ENCODE measurements at regions of chr11 and their contacts with region 1.

Region 1: GRCh38 chr11:114148013-114148382 is 88.5 kb downstream of the ZBTB16 start:
- DNase-seq: no peak
- H3K4me3 ChIP-seq: no peak overlapping the region
- H3K27ac ChIP-seq: peak overlapping the region; percentile 70 to 99
- H3K4me1 ChIP-seq: peaks cover 31% of the 10 kb centered on the region
- H3K27me3 ChIP-seq: no peaks in the 10 kb centered on the region
- CTCF ChIP-seq: no peak
- POLR2A ChIP-seq: no peak

Region 2: GRCh38 chr11:113628912-113629311 is 519.1 kb before region 1 on chr11:
- intact Hi-C with region 1: no loop called
- DNase-seq: no peak
- H3K4me3 ChIP-seq: no peak overlapping the region
- H3K27ac ChIP-seq: no peak overlapping the region
- H3K4me1 ChIP-seq: no peaks in the 10 kb centered on the region
- H3K27me3 ChIP-seq: no peaks in the 10 kb centered on the region
- CTCF ChIP-seq: no peak
- POLR2A ChIP-seq: no peak

Region 3: DNA sequence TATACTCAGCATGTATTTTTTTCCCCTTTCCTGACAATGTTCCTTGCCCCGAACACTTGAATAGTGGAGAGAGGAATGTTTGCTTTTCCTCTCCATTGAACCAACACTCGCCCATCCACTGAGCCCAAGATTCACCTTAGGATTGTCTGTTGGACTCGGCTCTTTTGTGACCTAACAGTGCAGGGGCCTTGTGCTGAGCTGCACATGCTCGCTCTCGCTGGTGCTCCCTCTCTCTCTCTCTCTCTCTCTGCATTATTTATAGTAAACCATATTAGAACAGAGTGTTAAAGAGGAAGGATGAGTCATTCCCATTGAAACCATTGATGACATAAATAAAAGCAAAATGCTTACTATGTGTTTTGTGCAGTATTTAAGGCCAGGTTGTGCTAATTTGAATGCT is 67.8 kb before region 1 on chr11:
- intact Hi-C with region 1: loop called (anchors 10 kb)
- DNase-seq: no peak
- H3K4me3 ChIP-seq: no peak overlapping the region
- H3K27ac ChIP-seq: peak overlapping the region; percentile 31 to 69
- H3K4me1 ChIP-seq: peaks cover 79% of the 10 kb centered on the region
- H3K27me3 ChIP-seq: no peaks in the 10 kb centered on the region
- CTCF ChIP-seq: no peak
- POLR2A ChIP-seq: no peak

Region 4: DNA sequence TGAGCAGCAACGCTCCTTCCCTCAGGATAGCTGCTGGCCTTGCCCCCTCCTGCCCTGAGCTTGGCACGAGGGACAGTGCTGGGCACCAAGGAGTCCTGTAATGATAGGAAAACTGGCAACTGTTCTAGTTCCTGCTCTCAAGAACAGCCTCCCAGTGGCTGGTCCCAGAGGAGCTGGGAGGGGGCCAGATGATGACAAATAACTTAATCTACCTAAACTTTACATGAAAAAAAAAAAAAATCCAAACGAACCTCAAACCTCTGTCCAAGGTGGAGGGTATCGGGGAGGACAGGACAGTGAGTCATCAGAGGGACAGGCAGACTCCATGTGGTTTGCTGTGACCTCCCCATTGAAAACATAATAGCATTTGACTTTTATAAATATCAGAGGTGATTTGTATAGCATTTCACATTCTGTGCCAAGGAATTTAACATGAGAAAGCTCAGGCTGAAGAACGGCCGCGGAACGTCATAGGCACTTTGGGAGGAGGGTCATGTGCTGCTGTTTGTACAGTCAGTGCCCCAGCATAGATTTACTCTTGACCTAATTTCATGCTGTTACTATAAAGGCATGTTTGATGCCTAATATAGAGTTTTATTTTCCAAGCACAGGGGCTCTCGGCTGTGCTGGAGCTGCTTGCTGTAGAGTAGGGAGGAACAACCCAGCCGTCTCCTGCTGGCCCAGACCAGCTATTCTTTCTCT is 50.0 kb after region 1 on chr11:
- intact Hi-C with region 1: no loop called
- DNase-seq: peak; percentile 88
- H3K4me3 ChIP-seq: no peak overlapping the region
- H3K27ac ChIP-seq: peak overlapping the region; percentile 94 to 95
- H3K4me1 ChIP-seq: peaks cover 53% of the 10 kb centered on the region
- H3K27me3 ChIP-seq: no peaks in the 10 kb centered on the region
- CTCF ChIP-seq: peak in 1 of 4 experiments; percentile 40
- POLR2A ChIP-seq: peak; percentile 33

Measured in prostate gland (tissue), 2 donors.